ENCODE measurements at regions of chr17 and their contacts with region 1.

Region 1: GRCh38 chr17:81294856-81295680 is at the start of gene SLC38A10:
- DNase-seq: peak; percentile 93 to 94
- ATAC-seq: peak; percentile 92 to 96 (median 94)
- H3K4me3 ChIP-seq: peak within 1 kb of the TSS; percentile 72 to 97 (median 86)
- H3K27ac ChIP-seq: peak within 1 kb of the TSS; percentile 86 to 99 (median 96)
- H3K4me1 ChIP-seq: peaks cover 12 to 47% (median 44%) of the 10 kb centered on the region in 9 donors
- H3K27me3 ChIP-seq: no peaks in the 10 kb centered on the region
- CTCF ChIP-seq: peak in 3 of 9 donors; percentile 23 to 31 (median 30)
- total RNA-seq, gene SLC38A10: 27.8 to 50.0 (median 37.9) TPM

Region 2: GRCh38 chr17:81064678-81065475 is 230.2 kb before region 1 on chr17:
- intact Hi-C with region 1: no loop called
- DNase-seq: peak in 1 of 2 donors; percentile 40
- ATAC-seq: peak in 6 of 8 donors; percentile 2 to 59 (median 34)
- H3K4me3 ChIP-seq: no peak overlapping the region
- H3K27ac ChIP-seq: peak overlapping the region in 7 of 10 donors; percentile 10 to 77 (median 27)
- H3K4me1 ChIP-seq: peaks cover 19 to 37% (median 30%) of the 10 kb centered on the region in 9 donors
- H3K27me3 ChIP-seq: no peaks in the 10 kb centered on the region
- CTCF ChIP-seq: no peak

Region 3: GRCh38 chr17:81253358-81254131 is 41.5 kb before region 1 on chr17:
- intact Hi-C with region 1: loop called in 2 of 10 experiments (anchors 5 kb)
- DNase-seq: peak in 1 of 2 donors; percentile 54
- ATAC-seq: peak in 5 of 8 donors; percentile 35 to 55 (median 46)
- H3K4me3 ChIP-seq: no peak overlapping the region
- H3K27ac ChIP-seq: no peak overlapping the region
- H3K4me1 ChIP-seq: peaks cover 4 to 24% (median 13%) of the 10 kb centered on the region in 9 donors
- H3K27me3 ChIP-seq: no peaks in the 10 kb centered on the region
- CTCF ChIP-seq: peak; percentile 67 to 86 (median 79)

Region 4: GRCh38 chr17:81339534-81340296 is 44.6 kb after region 1 on chr17:
- intact Hi-C with region 1: loop called in 1 of 10 experiments (anchors 5 kb)
- DNase-seq: no peak
- ATAC-seq: peak in 2 of 8 donors; percentile 2 to 3
- H3K4me3 ChIP-seq: no peak overlapping the region
- H3K27ac ChIP-seq: peak overlapping the region in 8 of 10 donors; percentile 68 to 98 (median 94)
- H3K4me1 ChIP-seq: peaks cover 9 to 76% (median 40%) of the 10 kb centered on the region in 9 donors
- H3K27me3 ChIP-seq: peaks cover 0 to 52% (median 0%) of the 10 kb centered on the region in 7 donors
- CTCF ChIP-seq: no peak

Region 5: DNA sequence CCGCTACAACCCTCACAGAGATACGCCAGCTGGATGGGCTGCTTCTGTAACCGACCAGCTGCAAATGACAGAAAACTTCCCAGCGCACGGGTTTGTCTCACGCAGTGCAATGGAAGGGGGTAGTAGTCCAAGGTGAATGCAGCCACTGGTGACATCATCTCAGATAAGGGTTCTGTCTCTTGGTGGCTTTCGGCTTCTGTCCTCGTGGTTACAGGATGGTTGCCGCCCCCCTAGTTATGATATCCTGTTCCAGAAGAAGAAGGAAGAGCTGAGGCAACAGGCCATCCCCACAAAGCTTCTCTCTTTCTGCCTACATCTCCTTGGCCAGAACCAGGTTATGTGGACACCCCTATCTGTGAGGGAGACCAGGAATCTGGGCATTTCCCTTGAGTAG is 59.9 kb after region 1 on chr17:
- intact Hi-C with region 1: no loop called
- DNase-seq: no peak
- ATAC-seq: no peak
- H3K4me3 ChIP-seq: no peak overlapping the region
- H3K27ac ChIP-seq: no peak overlapping the region
- H3K4me1 ChIP-seq: peaks cover 0 to 10% (median 0%) of the 10 kb centered on the region in 9 donors
- H3K27me3 ChIP-seq: no peaks in the 10 kb centered on the region
- CTCF ChIP-seq: no peak

Region 6: DNA sequence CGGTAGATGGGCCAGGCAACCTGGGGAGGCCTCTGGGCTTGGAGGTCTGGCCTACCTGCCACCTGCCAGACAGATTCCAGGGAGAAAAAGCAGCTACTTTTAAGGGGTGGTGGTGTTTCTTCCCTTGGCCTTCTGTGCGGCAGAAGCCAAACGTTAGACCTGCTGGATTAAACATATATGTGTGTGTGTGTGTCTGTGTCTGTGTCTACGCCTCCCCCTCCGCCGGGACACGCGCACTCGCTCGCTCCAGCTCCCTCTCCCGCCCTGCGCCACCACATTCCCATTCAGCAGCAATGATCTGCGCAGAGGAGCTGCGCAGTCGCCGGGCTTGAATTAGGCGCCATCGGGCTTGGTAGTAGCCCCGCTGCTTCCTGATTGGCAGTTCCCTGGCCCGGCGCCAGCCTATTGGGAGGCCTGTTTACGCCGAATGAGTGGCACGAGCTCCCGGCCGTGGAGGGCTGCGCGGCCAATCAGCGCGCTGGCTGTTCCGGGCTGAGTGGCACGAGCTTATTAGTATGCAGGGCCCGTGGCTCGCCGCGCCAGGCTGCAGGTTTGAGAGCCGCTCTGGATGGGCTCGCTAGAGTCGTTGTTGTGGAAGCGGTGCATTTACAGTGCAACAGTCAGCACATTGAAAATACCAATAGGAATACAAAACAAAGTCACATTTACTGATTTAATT is 100.0 kb after region 1 on chr17 and contains the start of gene BAHCC1:
- intact Hi-C with region 1: loop called in 6 of 10 experiments (anchors 1 to 5 kb)
- DNase-seq: peak; percentile 100
- ATAC-seq: peak; percentile 73 to 92 (median 88)
- H3K4me3 ChIP-seq: peak within 1 kb of the TSS; percentile 63 to 94 (median 78)
- H3K27ac ChIP-seq: peak within 1 kb of the TSS; percentile 92 to 99 (median 96)
- H3K4me1 ChIP-seq: peaks cover 12 to 72% (median 34%) of the 10 kb centered on the region in 9 donors
- H3K27me3 ChIP-seq: peaks cover 0 to 66% (median 0%) of the 10 kb centered on the region in 7 donors
- CTCF ChIP-seq: no peak
- total RNA-seq, gene BAHCC1: 6.3 to 11.1 (median 9.2) TPM

Region 7: GRCh38 chr17:81484195-81484979 is 189.3 kb after region 1 on chr17:
- intact Hi-C with region 1: loop called in 9 of 10 experiments (anchors 1 to 10 kb)
- DNase-seq: peak; percentile 88 to 90
- ATAC-seq: peak; percentile 48 to 76 (median 64)
- H3K4me3 ChIP-seq: peak overlapping the region in 9 of 10 donors; percentile 33 to 59 (median 54)
- H3K27ac ChIP-seq: peak overlapping the region in 5 of 10 donors; percentile 38 to 59 (median 52)
- H3K4me1 ChIP-seq: peaks cover 23 to 78% (median 61%) of the 10 kb centered on the region in 9 donors
- H3K27me3 ChIP-seq: peaks cover 0 to 40% (median 0%) of the 10 kb centered on the region in 7 donors
- CTCF ChIP-seq: peak in 8 of 9 donors; percentile 95 to 100 (median 99)

Measured in heart right ventricle (tissue), 16 donors.